Heart left ventricle (tissue), 16 donors: ENCODE measurements at regions of chr1 and their contacts with region 1.

Region 1: DNA sequence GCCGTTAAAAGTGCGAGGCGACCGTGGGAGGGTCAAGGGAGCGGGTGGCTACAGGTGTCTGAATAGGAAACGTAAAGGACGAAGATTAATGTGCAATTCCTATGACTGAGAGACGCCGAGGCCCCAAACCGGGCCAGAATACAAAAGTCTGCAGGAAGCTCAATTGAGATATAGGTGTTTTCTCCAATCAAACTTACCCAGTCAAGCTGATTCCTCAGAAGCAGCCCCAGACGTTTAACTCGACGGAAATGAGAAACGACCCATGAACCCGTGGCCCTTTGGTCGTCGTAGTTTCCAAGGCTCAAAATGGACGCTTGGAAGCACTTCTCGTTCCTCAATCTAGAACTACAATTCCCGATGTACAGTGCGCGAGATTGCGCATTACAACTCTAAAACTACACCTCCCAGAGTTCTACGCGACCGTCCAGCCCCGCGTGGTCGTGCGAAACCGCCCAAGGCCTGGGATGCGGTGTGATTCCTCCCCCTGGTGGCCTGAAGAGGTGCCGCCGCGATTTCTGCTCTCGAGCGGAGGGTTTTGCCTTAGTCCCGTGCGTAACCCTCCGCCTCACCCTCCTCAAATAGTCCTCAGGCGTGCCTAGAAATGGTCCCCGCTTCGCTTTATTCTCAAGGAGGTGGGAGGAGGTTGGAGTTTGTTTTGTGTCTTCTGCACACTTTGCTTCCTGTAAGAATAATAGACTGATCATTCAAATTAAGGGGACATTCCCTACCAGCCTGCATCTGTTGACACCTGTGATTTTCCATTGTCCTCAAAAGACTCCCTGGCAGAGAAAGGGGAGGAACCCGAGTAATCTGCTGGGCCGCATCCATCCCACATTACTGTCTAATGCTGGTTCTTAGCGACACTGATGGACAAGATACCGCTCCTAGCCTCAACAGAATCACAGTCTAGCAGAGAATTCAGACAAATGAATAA is at the start of gene PAFAH2:
- DNase-seq: peak; percentile 98
- ATAC-seq: peak; percentile 99 to 100 (median 100)
- H3K4me3 ChIP-seq: peak within 1 kb of the TSS; percentile 40 to 85 (median 71)
- H3K27ac ChIP-seq: peak within 1 kb of the TSS; percentile 35 to 93 (median 88)
- H3K4me1 ChIP-seq: peaks cover 0 to 24% (median 15%) of the 10 kb centered on the region in 12 donors
- H3K27me3 ChIP-seq: no peaks in the 10 kb centered on the region
- CTCF ChIP-seq: peak; percentile 95 to 99 (median 98)
- POLR2A ChIP-seq: peak in 1 of 2 donors; percentile 58
- total RNA-seq, gene PAFAH2: 5.8 to 18.6 (median 9.7) TPM

Region 2: DNA sequence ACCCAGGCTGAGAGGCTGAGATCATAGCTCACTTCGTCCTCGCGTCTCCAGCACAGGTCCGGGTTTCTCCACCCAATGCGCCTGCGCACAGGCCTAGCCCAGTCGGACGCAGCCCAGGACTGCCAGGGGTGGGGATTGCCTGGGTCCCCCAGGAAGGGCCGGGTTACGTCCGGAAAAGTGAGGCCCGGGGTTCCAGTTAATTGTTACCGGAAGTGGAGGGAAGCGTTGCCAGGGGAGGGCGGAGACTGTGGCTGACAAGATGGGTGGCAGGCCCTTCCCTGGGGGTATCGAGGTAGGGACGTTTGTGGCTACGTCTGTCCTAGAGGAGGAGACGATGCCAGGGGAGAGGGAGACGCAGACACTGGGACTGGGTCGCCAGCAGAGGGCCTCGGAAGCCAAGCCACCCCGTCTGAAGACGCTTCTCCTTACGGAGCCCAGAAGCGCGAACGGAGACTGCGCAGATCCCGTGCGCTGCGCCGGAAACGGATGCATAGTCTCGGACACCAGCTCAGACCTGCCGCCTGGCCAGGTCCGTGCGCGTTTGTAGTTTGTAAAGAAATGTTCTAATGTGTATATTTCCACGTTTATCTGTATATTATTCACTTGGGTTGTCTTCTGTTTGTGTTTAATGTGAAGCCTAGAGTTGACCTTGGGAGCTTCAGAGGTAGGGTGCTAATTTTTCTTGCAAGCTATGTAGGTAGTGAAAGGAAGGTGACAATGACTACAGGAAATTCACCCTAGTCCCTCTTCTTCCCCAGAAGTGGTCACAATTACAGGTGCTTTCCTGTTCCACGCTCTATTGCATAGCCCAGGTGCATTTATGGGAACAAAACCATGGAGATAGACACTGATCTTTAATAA is 758.2 kb before region 1 on chr1:
- intact Hi-C with region 1: loop called in 1 of 10 experiments (anchors 10 kb)
- DNase-seq: peak; percentile 90 to 95 (median 93)
- ATAC-seq: peak; percentile 91 to 95 (median 94)
- H3K4me3 ChIP-seq: peak overlapping the region in 11 of 12 donors; percentile 24 to 64 (median 53)
- H3K27ac ChIP-seq: peak overlapping the region; percentile 75 to 97 (median 89)
- H3K4me1 ChIP-seq: peaks cover 5 to 79% (median 39%) of the 10 kb centered on the region in 12 donors
- H3K27me3 ChIP-seq: no peaks in the 10 kb centered on the region
- CTCF ChIP-seq: peak; percentile 46 to 80 (median 61)
- POLR2A ChIP-seq: peak in 1 of 2 donors; percentile 47

Region 3: DNA sequence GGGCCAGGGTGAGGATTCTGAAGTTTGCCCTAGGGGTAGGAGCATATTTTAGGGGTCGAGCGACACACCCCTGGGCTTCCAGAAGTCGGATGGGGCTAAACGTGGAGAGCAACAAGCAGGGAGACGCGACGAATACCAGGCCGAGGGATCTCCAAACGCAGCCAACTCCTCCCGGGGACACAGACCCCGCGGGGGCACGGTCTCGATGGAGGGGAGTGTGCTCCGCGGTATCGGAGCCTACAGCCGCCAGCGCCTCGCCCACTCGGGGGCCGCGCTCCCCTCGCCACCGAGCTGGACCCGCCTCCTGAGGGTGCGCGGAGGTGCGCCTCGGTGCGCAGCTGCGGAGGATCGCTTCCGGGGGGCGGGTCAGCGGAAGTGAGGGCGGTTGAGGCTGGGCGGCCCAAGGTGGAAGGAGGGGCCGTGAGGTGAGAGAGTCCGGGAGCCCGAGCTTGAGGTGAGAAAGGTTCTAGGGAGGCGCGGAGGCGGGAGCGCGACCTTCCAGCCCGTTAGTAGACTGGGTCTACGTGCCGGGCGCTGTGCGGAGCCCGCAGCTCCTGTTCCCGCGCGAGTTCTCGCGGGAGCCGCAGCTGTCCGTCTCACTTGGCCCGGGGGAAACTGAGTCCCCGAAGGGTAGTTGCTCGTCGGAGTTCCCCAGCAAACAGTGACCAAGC is 178.4 kb before region 1 on chr1 and contains the start of gene MTFR1L:
- intact Hi-C with region 1: loop called in 3 of 10 experiments (anchors 2 to 10 kb)
- DNase-seq: peak; percentile 90 to 93 (median 92)
- ATAC-seq: peak; percentile 89 to 91 (median 90)
- H3K4me3 ChIP-seq: peak within 1 kb of the TSS; percentile 74 to 98 (median 89)
- H3K27ac ChIP-seq: peak within 1 kb of the TSS; percentile 81 to 98 (median 92)
- H3K4me1 ChIP-seq: peaks cover 0 to 59% (median 34%) of the 10 kb centered on the region in 12 donors
- H3K27me3 ChIP-seq: no peaks in the 10 kb centered on the region
- CTCF ChIP-seq: no peak
- POLR2A ChIP-seq: peak in 1 of 2 donors; percentile 89
- total RNA-seq, gene MTFR1L: 123 to 319 (median 214) TPM

Region 4: DNA sequence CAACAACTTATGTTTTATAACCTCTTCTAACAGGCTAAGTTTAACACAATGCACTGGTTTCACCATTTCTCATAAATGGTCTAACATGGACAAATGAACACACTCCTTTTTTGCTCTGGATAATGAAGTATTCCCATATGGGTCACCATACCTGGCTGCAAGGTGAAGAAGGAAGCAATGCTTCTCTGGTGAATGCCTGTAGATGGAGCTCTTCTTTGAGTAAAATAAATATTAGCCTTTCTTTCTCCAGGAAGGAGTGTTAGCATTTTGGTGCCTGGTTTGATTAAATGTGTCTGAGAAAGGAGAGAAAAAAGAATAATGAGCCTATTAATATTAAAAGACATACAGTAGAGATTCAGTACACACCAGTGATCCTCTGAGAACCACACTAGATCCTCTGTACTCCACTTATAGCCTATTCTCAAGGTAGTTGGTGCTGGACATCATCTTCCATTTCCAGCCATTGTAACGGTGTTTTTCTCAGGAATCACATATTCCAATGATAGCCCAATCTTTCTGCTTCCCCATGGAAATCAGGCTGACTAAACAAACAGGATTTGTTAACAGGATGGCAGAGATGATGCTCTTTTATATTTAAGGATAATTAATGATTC is 160.7 kb before region 1 on chr1:
- intact Hi-C with region 1: loop called in 2 of 10 experiments (anchors 10 kb)
- DNase-seq: no peak
- ATAC-seq: no peak
- H3K4me3 ChIP-seq: no peak overlapping the region
- H3K27ac ChIP-seq: no peak overlapping the region
- H3K4me1 ChIP-seq: peaks cover 0 to 13% (median 5%) of the 10 kb centered on the region in 12 donors
- H3K27me3 ChIP-seq: no peaks in the 10 kb centered on the region
- CTCF ChIP-seq: peak in 5 of 12 donors; percentile 6 to 31 (median 16)
- POLR2A ChIP-seq: no peak

Region 5: DNA sequence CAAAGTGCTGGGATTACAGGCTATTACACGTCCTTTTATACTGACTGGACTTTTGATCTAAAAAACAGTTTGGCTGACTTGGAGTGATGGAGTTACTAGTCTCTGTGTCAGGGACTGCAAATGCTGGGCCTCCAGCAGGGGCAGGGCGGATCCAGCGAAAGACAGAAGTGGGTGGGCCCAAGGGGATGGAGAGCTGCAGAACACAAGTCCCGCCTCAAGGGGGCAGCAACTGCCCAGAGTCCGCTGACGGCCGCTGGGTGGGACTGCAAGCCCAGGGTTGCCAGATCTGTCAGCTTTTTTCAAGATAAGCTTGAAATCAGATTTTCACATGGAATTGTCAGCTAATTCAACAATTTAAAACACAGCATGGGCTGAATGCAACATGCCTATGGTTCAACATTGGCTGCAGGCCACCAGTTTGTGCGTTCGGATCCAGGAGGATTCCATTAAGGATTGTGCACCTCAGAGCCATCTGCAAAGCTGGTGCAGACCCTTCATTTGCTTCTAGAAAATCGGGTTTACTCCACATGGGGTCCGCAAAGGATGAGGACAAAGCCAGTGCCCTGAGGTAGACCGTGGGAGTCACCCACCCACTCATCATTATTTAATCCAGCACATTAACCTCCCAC is 102.6 kb before region 1 on chr1:
- intact Hi-C with region 1: loop called (anchors 1 to 2 kb)
- DNase-seq: peak; percentile 91 to 94 (median 92)
- ATAC-seq: peak; percentile 93 to 98 (median 94)
- H3K4me3 ChIP-seq: peak overlapping the region in 5 of 12 donors; percentile 7 to 26 (median 14)
- H3K27ac ChIP-seq: no peak overlapping the region
- H3K4me1 ChIP-seq: peaks cover 0 to 15% (median 7%) of the 10 kb centered on the region in 12 donors
- H3K27me3 ChIP-seq: no peaks in the 10 kb centered on the region
- CTCF ChIP-seq: peak; percentile 97 to 100 (median 99)
- POLR2A ChIP-seq: peak in 1 of 2 donors; percentile 16

Region 6: GRCh38 chr1:25904943-25905679 is 93.0 kb before region 1 on chr1:
- intact Hi-C with region 1: loop called in 4 of 10 experiments (anchors 2 kb)
- DNase-seq: peak; percentile 94 to 96 (median 95)
- ATAC-seq: peak; percentile 90 to 96 (median 95)
- H3K4me3 ChIP-seq: peak overlapping the region; percentile 59 to 85 (median 67)
- H3K27ac ChIP-seq: peak overlapping the region in 10 of 12 donors; percentile 40 to 82 (median 64)
- H3K4me1 ChIP-seq: peaks cover 4 to 30% (median 20%) of the 10 kb centered on the region in 12 donors
- H3K27me3 ChIP-seq: no peaks in the 10 kb centered on the region
- CTCF ChIP-seq: peak in 1 of 12 donors; percentile 14
- POLR2A ChIP-seq: no peak

Region 7: GRCh38 chr1:26138974-26139558 is 141.0 kb after region 1 on chr1:
- intact Hi-C with region 1: no loop called
- DNase-seq: no peak
- ATAC-seq: no peak
- H3K4me3 ChIP-seq: no peak overlapping the region
- H3K27ac ChIP-seq: no peak overlapping the region
- H3K4me1 ChIP-seq: no peaks in the 10 kb centered on the region
- H3K27me3 ChIP-seq: no peaks in the 10 kb centered on the region
- CTCF ChIP-seq: no peak
- POLR2A ChIP-seq: no peak